Ascending aorta (tissue), 2 donors: ENCODE measurements at regions of chr18 and their contacts with region 1.

Region 1: DNA sequence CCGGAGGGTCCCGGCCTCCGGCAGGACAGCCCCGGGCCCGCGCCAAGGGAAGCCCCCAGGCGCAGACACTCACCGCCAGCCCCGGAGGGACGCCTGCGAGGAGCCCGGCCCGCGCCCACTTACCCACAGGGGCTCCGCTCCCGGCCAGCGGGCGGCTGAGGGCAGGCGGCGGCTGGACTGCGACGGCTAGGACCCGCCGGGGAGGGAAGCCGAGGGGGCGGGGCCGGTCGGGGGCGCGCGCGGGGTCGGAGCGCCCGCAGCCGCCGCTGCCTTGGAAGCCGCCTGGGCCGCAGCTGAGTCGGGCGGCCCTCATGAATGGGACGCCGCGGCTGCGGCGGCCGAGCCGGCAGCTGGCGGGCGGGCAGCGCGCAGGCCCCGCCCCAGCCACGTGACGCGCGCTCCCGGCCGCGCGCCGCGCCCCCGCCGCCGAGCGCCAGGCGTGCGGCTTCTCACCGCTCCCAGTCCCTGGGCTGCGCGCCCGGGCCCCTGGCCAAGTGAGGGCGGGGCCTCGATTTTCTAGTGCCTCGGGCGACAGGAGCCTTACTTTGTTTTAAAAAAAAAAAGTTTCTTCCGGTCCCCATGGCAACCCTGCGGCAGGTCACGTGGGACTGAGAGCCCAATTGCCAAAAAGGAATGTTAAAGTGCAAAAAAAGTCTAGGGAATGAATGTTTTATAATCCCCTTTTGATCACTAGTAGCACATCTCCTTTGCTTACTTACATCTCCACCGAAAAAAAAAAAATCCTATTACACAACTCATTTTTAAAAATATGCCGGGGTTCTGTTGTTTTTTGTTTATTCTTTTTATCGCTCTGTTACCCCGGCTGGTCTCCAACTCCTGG is at the start of gene LPIN2:
- DNase-seq: peak; percentile 97 to 100
- H3K4me3 ChIP-seq: peak within 1 kb of the TSS; percentile 98 to 99
- H3K27ac ChIP-seq: peak within 1 kb of the TSS; percentile 92 to 100
- H3K4me1 ChIP-seq: peaks cover 4 to 37% of the 10 kb centered on the region in 2 donors
- H3K27me3 ChIP-seq: no peaks in the 10 kb centered on the region
- CTCF ChIP-seq: no peak
- total RNA-seq, gene LPIN2: 11.6 TPM

Region 2: DNA sequence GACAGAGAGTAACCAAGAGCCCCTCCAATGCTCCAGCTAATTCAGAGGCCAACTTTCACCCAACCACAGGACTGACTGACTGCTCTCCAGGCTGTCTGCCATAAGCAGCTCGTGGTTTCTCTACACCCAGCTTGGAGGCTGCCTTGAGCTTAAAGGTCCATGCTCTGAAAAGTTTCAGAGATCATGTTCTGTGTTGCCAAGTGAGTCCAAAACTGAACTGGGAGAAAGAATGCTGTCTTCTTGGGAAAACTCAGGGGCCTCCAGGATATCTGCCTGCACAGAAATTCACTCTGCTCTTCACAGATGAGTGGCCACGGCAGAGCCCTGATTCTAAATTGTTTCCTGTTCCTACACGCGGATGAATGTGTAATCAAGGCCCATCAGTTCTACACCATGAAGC is 51.4 kb before region 1 on chr18:
- intact Hi-C with region 1: loop called (anchors 5 kb)
- DNase-seq: no peak
- H3K4me3 ChIP-seq: peak overlapping the region in 1 of 2 donors; percentile 23
- H3K27ac ChIP-seq: peak overlapping the region; percentile 74
- H3K4me1 ChIP-seq: peaks cover 22 to 38% of the 10 kb centered on the region in 2 donors
- H3K27me3 ChIP-seq: no peaks in the 10 kb centered on the region
- CTCF ChIP-seq: no peak

Region 3: GRCh38 chr18:2994603-2995432 is 18.4 kb before region 1 on chr18:
- intact Hi-C with region 1: loop called (anchors 2 kb)
- DNase-seq: peak in 1 of 2 donors; percentile 75
- H3K4me3 ChIP-seq: no peak overlapping the region
- H3K27ac ChIP-seq: peak overlapping the region; percentile 60 to 71
- H3K4me1 ChIP-seq: peaks cover 7 to 32% of the 10 kb centered on the region in 2 donors
- H3K27me3 ChIP-seq: no peaks in the 10 kb centered on the region
- CTCF ChIP-seq: peak; percentile 47 to 60 (median 50)

Region 4: GRCh38 chr18:3037423-3037915 is 24.3 kb after region 1 on chr18:
- intact Hi-C with region 1: loop called (anchors 2 kb)
- DNase-seq: peak in 1 of 2 donors; percentile 75
- H3K4me3 ChIP-seq: no peak overlapping the region
- H3K27ac ChIP-seq: peak overlapping the region; percentile 49 to 57
- H3K4me1 ChIP-seq: peaks cover 3 to 7% of the 10 kb centered on the region in 2 donors
- H3K27me3 ChIP-seq: no peaks in the 10 kb centered on the region
- CTCF ChIP-seq: no peak